ENCODE measurements at regions of chr2 and their contacts with region 1.

Region 1: DNA sequence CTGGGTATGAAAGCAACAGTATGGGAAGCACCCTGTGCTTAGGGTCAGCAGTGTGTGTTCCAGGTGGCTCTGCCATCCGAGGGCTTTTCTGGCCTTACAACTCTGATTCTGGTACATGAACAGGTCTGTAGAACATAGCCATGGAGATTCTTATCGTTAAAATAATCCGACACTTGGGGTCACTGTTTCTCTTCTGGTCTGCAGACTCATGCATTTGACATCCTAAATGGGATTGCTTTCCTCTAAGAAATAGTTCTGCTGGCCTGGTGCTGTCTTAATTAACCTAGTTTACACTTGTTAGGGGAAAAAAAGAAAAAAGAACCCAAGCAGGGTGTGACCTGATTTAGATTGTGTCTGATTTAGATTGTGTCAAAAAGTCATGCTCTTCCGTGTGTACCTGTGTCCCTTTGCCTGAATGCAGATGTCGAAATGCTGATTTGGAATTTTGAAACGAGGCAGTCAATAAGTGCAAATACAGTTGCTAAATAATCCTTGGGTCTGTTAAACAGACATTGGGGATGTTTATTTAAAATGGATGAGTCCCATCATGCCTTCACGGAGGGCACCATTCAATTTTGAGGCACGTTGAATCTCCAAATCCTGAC is 59.6 kb downstream of the TRPM8 start:
- DNase-seq: peak in 4 of 14 experiments; percentile 40 to 80 (median 80)
- ATAC-seq: peak; percentile 68
- H3K4me3 ChIP-seq: no peak overlapping the region
- H3K4me3 Mint-ChIP-seq: no peak overlapping the region
- H3K27ac ChIP-seq: no peak overlapping the region
- H3K27ac Mint-ChIP-seq: no peak overlapping the region
- H3K4me1 ChIP-seq: peaks cover 17% of the 10 kb centered on the region
- H3K4me1 Mint-ChIP-seq: peaks cover 28% of the 10 kb centered on the region
- H3K27me3 ChIP-seq: no peaks in the 10 kb centered on the region
- H3K27me3 Mint-ChIP-seq: no peaks in the 10 kb centered on the region
- CTCF ChIP-seq: peak; percentile 81

Region 2: DNA sequence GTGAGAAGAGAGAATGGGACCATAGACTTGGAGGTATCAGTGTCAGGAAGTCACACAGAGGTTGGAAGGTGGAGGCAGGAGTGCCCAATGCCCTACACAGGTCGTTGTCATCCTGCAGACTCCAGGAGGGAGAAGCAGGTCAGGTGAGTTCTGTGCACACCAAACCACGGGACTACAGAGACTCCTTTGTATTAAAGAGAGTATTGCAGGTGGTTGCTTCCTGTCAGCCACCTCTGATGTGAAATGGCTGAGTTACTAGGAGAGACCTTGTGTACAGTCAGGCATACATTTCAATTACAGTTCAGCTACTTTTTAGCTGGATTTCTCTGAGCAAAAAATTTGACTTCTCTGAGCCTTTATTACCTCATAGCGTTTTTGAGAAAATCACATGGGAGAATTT is 125.3 kb after region 1 on chr2:
- CTCF ChIA-PET with region 1: no interaction called
- POLR2A ChIA-PET with region 1: no interaction called
- intact Hi-C with region 1: loop called in 1 of 2 experiments (anchors 5 kb)
- DNase-seq: peak in 6 of 14 experiments; percentile 11 to 72 (median 50)
- ATAC-seq: peak; percentile 89
- H3K4me3 ChIP-seq: no peak overlapping the region
- H3K4me3 Mint-ChIP-seq: peak overlapping the region; percentile 73
- H3K27ac ChIP-seq: no peak overlapping the region
- H3K27ac Mint-ChIP-seq: peak overlapping the region; percentile 31
- H3K4me1 ChIP-seq: peaks cover 32% of the 10 kb centered on the region
- H3K4me1 Mint-ChIP-seq: peaks cover 50% of the 10 kb centered on the region
- H3K27me3 ChIP-seq: no peaks in the 10 kb centered on the region
- H3K27me3 Mint-ChIP-seq: no peaks in the 10 kb centered on the region
- CTCF ChIP-seq: peak; percentile 41

Region 3: GRCh38 chr2:234544659-234545611 is 568.1 kb after region 1 on chr2:
- CTCF ChIA-PET with region 1: no interaction called
- POLR2A ChIA-PET with region 1: no interaction called
- intact Hi-C with region 1: loop called (anchors 1 kb)
- DNase-seq: peak; percentile 59 to 86 (median 70)
- ATAC-seq: peak; percentile 93
- H3K4me3 ChIP-seq: no peak overlapping the region
- H3K4me3 Mint-ChIP-seq: no peak overlapping the region
- H3K27ac ChIP-seq: no peak overlapping the region
- H3K27ac Mint-ChIP-seq: no peak overlapping the region
- H3K4me1 ChIP-seq: peaks cover 6% of the 10 kb centered on the region
- H3K4me1 Mint-ChIP-seq: no peaks in the 10 kb centered on the region
- H3K27me3 ChIP-seq: peaks cover 0 to 5% of the 10 kb centered on the region in 2 experiments
- H3K27me3 Mint-ChIP-seq: peaks cover 38% of the 10 kb centered on the region
- CTCF ChIP-seq: peak; percentile 93

Region 4: DNA sequence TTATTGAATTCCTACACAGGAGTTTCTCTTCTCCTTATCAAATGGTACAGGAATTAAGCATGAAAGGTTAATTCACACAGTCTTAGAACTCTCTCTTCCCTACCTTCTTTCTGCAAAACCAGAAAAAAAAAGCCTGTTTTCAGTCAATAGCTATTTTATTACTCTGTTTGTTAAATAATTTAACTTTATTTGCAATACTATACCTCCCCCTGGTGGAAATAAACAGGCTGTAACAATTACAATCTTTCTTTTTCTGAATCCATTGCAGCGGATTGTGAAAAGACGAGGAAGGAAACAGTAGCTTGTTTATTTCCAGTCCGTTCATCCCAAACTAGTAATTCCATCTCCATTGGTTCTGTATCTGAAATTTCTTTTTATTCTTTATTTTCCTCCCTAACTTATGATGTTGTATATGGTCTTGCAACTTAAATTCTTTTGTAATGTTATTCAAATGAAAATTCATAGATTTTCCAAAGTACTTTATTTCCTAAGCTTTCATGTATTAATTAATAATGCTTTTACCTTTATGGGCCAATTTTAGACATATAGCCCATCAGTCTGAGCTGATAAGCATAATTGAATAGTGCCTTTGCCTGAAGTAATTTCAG is 1140.2 kb after region 1 on chr2:
- CTCF ChIA-PET with region 1: no interaction called
- POLR2A ChIA-PET with region 1: no interaction called
- intact Hi-C with region 1: loop called in 1 of 2 experiments (anchors 5 kb)
- DNase-seq: peak in 3 of 14 experiments; percentile 22 to 34 (median 34)
- ATAC-seq: no peak
- H3K4me3 ChIP-seq: no peak overlapping the region
- H3K4me3 Mint-ChIP-seq: no peak overlapping the region
- H3K27ac ChIP-seq: no peak overlapping the region
- H3K27ac Mint-ChIP-seq: no peak overlapping the region
- H3K4me1 ChIP-seq: no peaks in the 10 kb centered on the region
- H3K4me1 Mint-ChIP-seq: no peaks in the 10 kb centered on the region
- H3K27me3 ChIP-seq: peaks cover 0 to 5% of the 10 kb centered on the region in 2 experiments
- H3K27me3 Mint-ChIP-seq: peaks cover 32% of the 10 kb centered on the region
- CTCF ChIP-seq: peak; percentile 58